A549 (cell line): ENCODE measurements at regions of chr19 and their contacts with region 1.

Region 1: DNA sequence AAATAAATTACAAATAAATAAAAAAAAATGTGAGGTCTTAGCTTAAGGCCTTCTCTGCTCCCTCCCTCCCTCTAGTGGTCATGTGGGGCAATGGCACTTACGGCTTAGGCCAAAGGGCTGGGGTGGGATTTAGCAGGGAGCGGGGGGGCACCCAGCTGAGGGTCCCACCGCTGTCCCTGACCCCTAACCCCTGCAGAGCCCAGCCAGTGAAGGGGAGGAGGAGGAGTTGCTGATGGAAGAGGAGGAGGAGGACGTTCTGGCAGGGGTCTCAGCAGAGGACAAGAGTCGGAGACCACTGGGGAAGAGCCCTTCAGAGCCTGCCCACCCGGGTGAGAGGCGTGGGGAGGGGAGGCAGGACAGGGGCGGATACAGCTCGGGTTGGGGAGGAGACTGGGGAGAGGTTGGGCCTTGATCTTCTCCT is 9.3 kb downstream of the MPND start:
- DNase-seq: peak; percentile 51 to 66
- ATAC-seq: peak in 1 of 2 experiments; percentile 74; a peak in 4 of 6 replicates
- H3K4me3 ChIP-seq: no peak overlapping the region
- H3K27ac ChIP-seq: no peak overlapping the region
- H3K4me1 ChIP-seq: no peaks in the 10 kb centered on the region
- CTCF ChIP-seq: peak; percentile 66
- EP300 ChIP-seq: no peak
- POLR2A ChIP-seq: no peak
- RAD21 ChIP-seq: peak; percentile 35 to 39; a peak in 3 of 5 replicates

Region 2: GRCh38 chr19:4369888-4370260 is 17.2 kb after region 1 on chr19:
- CTCF ChIA-PET with region 1: interaction called, 21 read pairs
- POLR2A ChIA-PET with region 1: interaction called, 3 read pairs
- DNase-seq: no peak
- ATAC-seq: peak; percentile 18 to 53; a peak in 4 of 6 replicates
- H3K4me3 ChIP-seq: no peak overlapping the region
- H3K27ac ChIP-seq: peak overlapping the region in 1 of 2 experiments; percentile 59; a peak in 2 of 6 replicates
- H3K4me1 ChIP-seq: peaks cover 31% of the 10 kb centered on the region
- CTCF ChIP-seq: 0 out of 3 replicates have a peak, but pooled peaks have one; percentile 23
- EP300 ChIP-seq: no peak
- POLR2A ChIP-seq: no peak
- RAD21 ChIP-seq: 0 out of 5 replicates have a peak, but pooled peaks have one; percentile 22 to 29

Region 3: GRCh38 chr19:4375164-4376027 is 22.7 kb after region 1 on chr19:
- CTCF ChIA-PET with region 1: interaction called, 10 read pairs
- POLR2A ChIA-PET with region 1: no interaction called
- DNase-seq: peak in 1 of 2 experiments; percentile 60
- ATAC-seq: peak; percentile 48 to 68
- H3K4me3 ChIP-seq: no peak overlapping the region
- H3K27ac ChIP-seq: peak overlapping the region; percentile 99
- H3K4me1 ChIP-seq: peaks cover 68% of the 10 kb centered on the region
- CTCF ChIP-seq: no peak
- EP300 ChIP-seq: no peak
- POLR2A ChIP-seq: no peak
- RAD21 ChIP-seq: no peak

Region 4: GRCh38 chr19:4471403-4472173 is 118.9 kb after region 1 on chr19:
- CTCF ChIA-PET with region 1: no interaction called
- POLR2A ChIA-PET with region 1: no interaction called
- DNase-seq: peak; percentile 96 to 99
- ATAC-seq: peak; percentile 94
- H3K4me3 ChIP-seq: peak overlapping the region; percentile 50
- H3K27ac ChIP-seq: peak overlapping the region; percentile 66 to 85
- H3K4me1 ChIP-seq: peaks cover 15% of the 10 kb centered on the region
- CTCF ChIP-seq: no peak
- EP300 ChIP-seq: no peak
- POLR2A ChIP-seq: no peak
- RAD21 ChIP-seq: no peak